GM13976 (cell line): ENCODE measurements at regions of chr9 and their contacts with region 1.

Region 1: DNA sequence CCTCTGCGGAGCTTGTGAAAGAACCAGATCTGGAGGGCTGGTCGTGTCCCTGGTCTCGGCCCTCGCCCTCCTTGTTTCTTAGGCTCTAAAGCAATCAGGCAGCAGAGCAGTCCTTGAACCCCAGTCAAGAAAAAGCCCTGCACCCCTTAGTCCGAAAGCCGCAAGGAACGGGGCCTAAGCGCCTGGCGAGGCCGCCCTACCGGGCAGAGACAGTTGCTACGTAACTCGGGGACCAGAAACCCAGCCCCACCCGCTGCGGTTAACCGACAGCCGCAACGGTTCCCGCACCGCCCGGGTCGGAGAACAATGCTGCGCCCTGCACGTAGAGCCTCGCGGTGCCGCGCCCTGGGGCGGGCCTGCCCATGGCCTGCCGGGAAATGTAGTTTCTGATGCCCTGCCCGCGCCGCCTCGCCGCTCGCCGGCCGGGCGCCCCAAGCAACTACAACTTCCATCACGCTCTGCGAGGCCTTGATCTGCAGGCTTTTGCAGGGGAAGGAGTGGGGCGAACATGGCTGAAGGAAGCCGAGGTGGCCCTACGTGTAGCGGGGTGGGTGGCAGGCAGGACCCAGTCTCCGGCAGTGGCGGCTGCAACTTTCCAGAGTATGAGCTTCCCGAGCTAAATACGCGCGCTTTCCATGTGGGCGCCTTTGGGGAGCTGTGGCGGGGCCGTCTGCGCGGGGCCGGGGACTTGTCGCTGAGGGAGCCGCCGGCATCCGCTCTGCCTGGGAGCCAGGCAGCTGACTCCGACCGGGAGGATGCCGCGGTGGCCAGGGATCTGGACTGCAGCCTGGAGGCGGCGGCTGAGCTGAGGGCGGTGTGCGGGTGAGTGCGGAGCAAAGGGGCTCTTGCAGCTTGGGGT is at the start of gene SNAPC3:
- DNase-seq: peak; percentile 97
- CTCF ChIP-seq: no peak

Region 2: GRCh38 chr9:15277400-15278090 is 145.1 kb before region 1 on chr9:
- in situ Hi-C with region 1: loop called (anchors 25 kb)
- DNase-seq: peak; percentile 32
- CTCF ChIP-seq: no peak